IMR-90 (cell line): ENCODE measurements at regions of chr19 and their contacts with region 1.

Region 1: GRCh38 chr19:49690656-49691242 is at the start of gene CPT1C:
- DNase-seq: peak; percentile 79
- ATAC-seq: peak; percentile 93
- H3K4me3 ChIP-seq: peak within 1 kb of the TSS; percentile 69
- H3K27ac ChIP-seq: peak within 1 kb of the TSS; percentile 66
- H3K4me1 ChIP-seq: peaks cover 9% of the 10 kb centered on the region
- H3K27me3 ChIP-seq: no peaks in the 10 kb centered on the region
- CTCF ChIP-seq: no peak
- POLR2A ChIP-seq: peak; percentile 73; the same call in 1 of the 2 replicates
- RAD21 ChIP-seq: no peak
- total RNA-seq, gene CPT1C: 14.2 and 14.7 TPM in 2 replicates

Region 2: DNA sequence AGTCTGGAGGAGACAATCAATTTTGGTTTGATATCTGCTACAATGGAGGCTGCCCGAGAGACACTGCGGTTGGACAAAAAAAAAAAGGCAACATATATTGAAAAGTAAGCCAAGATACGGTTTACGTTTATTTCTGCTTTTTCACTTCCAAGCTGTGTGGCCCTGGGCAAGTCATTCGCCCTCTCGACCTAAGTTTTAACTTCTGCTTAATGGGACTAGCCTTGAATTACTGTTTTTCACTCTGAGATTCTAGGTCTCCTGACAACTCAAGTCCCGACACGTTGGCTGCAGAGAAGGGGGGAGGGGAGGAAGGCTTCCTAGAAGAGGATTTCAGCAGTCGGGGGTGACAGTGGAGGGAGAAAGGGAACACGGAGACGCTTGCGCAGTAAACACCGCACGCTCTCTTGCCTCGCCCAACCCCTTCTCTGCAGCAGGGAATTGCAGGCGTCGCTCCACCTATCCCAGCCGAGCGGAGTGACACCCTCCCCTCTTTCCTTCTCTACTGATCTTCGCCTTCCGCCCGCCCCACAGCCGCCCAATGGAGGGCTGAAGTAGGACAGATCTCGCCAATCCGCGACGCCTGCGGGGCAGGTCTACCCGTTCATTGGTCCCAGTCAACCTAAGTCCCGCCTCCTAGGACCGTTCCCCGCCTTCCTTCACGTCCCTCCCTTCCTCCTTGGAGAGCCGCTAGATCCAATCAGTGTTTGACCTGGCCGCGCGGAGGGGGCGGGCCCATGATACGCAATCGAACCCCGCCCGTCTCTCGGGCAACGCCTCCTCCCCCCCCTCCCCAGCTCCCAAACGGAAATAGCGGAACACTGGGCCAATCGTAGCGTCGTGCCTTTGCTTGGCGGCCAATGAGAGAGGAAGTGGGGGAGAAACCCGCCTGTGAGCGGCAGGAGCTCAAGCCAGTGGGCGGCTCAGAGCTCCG is 75.5 kb after region 1 on chr19:
- CTCF ChIA-PET with region 1: no interaction called
- POLR2A ChIA-PET with region 1: no interaction called
- dilution Hi-C with region 1: no loop called
- in situ Hi-C with region 1: no loop called
- intact Hi-C with region 1: loop called (anchors 2 kb)
- DNase-seq: peak; percentile 100
- ATAC-seq: peak; percentile 91
- H3K4me3 ChIP-seq: peak overlapping the region; percentile 31; the same call in 1 of the 2 replicates
- H3K27ac ChIP-seq: peak overlapping the region; percentile 89
- H3K4me1 ChIP-seq: peaks cover 11% of the 10 kb centered on the region
- H3K27me3 ChIP-seq: no peaks in the 10 kb centered on the region
- CTCF ChIP-seq: no peak
- POLR2A ChIP-seq: peak; percentile 38; the same call in 1 of the 2 replicates
- RAD21 ChIP-seq: 0 out of 2 replicates have a peak, but pooled peaks have one; percentile 9

Region 3: DNA sequence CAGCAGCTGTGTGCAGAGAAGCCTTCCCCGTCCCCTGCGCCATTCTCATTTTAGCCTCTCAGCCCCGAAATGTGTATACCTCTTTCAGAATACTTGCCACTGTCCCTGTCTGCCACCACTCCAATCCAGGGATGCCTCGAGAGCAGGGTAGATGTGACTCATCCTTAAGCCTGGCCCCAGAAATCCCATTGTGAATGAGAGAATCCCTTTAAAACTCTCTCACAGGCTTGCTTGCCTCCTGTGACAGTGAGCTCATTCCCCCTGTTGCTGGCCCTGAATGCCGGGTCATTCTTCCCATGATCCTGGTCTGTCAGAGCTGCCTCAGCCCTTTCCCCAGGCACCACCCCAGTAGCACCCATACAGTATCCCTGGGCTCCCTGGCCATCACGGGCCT is 85.6 kb after region 1 on chr19:
- CTCF ChIA-PET with region 1: no interaction called
- POLR2A ChIA-PET with region 1: no interaction called
- dilution Hi-C with region 1: no loop called
- in situ Hi-C with region 1: no loop called
- intact Hi-C with region 1: no loop called
- DNase-seq: no peak
- ATAC-seq: no peak
- H3K4me3 ChIP-seq: no peak overlapping the region
- H3K27ac ChIP-seq: no peak overlapping the region
- H3K4me1 ChIP-seq: no peaks in the 10 kb centered on the region
- H3K27me3 ChIP-seq: no peaks in the 10 kb centered on the region
- CTCF ChIP-seq: no peak
- POLR2A ChIP-seq: no peak
- RAD21 ChIP-seq: no peak

Region 4: GRCh38 chr19:49801966-49802690 is 111.4 kb after region 1 on chr19:
- CTCF ChIA-PET with region 1: no interaction called
- POLR2A ChIA-PET with region 1: interaction called, 4 read pairs
- dilution Hi-C with region 1: no loop called
- in situ Hi-C with region 1: no loop called
- intact Hi-C with region 1: loop called (anchors 5 kb)
- DNase-seq: peak; percentile 86
- ATAC-seq: peak; percentile 99
- H3K4me3 ChIP-seq: peak overlapping the region; percentile 48
- H3K27ac ChIP-seq: peak overlapping the region; percentile 74
- H3K4me1 ChIP-seq: no peaks in the 10 kb centered on the region; the same call in 1 of the 2 replicates
- H3K27me3 ChIP-seq: no peaks in the 10 kb centered on the region
- CTCF ChIP-seq: peak; percentile 38
- POLR2A ChIP-seq: no peak
- RAD21 ChIP-seq: peak; percentile 25; the same call in 1 of the 2 replicates